ENCODE measurements at regions of chr16 and their contacts with region 1.

Region 1: DNA sequence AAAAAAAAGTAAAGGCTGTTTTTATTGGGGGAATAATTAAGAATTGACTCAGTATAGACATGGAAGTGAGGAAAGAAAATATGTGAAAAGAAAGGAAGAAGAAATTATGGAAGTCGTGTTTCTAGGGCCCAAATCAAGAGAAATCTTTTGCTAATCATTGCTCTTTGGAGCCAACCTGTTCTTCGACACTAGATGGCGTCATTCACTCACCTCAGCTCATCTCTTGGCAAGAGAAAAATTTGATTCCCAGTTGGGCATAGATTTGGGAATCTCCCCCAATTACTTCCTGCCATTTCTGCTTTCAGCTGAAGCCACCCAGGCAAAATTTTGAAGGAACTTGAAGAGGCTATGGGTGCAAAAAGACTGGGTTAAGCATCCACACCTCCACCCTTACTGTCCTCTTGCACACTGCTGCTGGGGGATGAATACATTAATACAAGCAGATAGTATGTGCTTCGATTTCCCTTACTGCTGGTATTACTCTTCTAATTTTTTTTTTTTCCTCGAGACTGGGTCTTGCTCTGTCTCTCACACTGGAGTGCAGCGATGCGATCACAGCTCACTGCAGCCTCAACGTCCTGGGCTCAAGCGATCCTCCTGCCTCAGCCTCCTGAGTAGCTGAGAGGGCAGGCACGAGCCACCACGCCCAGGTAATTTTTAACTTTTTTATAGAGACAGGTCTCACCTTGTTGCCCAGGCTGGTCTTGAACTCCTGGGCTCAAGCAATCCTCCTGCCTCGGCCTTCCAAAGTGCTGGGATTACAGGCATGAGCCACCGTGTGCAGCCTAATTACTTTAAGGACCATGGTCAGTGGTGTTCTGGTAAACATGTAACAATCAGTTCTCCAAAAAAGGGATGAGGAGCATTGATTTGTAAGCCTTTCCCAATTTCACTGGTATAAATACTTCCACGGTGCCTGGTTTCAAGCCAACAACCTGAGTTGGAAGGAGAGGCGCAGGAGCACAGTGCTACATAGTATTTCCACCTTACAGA is 13.5 kb downstream of the PSMD7 start:
- DNase-seq: no peak
- ATAC-seq: peak; percentile 81
- H3K4me3 ChIP-seq: no peak overlapping the region
- H3K27ac ChIP-seq: no peak overlapping the region
- H3K4me1 ChIP-seq: no peaks in the 10 kb centered on the region
- H3K27me3 ChIP-seq: no peaks in the 10 kb centered on the region
- CTCF ChIP-seq: peak; percentile 78 to 86 (median 82)
- EP300 ChIP-seq: no peak
- POLR2A ChIP-seq: no peak
- RAD21 ChIP-seq: peak; percentile 82

Region 2: DNA sequence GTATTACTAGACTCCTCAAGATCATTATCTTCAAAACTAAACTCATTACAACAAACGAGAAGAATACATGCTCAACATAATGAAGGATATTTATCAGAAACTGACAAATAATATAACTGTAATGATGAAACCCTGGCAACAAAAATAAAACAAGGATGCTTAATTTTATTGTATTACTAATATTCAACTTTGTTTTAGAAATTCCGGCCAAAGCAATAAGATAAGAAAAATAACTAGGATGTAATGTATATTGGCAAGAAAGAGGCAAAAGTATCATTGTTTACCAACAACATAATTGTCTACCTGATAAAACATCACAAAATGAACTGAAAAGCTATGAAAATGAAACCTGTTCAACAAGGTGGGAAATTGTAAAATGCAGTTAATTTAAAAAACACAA is 673.9 kb before region 1 on chr16:
- CTCF ChIA-PET with region 1: no interaction called
- POLR2A ChIA-PET with region 1: no interaction called
- RAD21 ChIA-PET with region 1: no interaction called
- SMC1A ChIA-PET with region 1: no interaction called
- in situ Hi-C with region 1: no loop called
- intact Hi-C with region 1: no loop called
- DNase-seq: no peak
- ATAC-seq: no peak
- H3K4me3 ChIP-seq: no peak overlapping the region
- H3K27ac ChIP-seq: no peak overlapping the region
- H3K4me1 ChIP-seq: no peaks in the 10 kb centered on the region
- H3K27me3 ChIP-seq: no peaks in the 10 kb centered on the region
- CTCF ChIP-seq: no peak
- EP300 ChIP-seq: no peak
- POLR2A ChIP-seq: no peak
- RAD21 ChIP-seq: no peak

Region 3: GRCh38 chr16:74079232-74079586 is 230.9 kb before region 1 on chr16:
- CTCF ChIA-PET with region 1: no interaction called
- POLR2A ChIA-PET with region 1: no interaction called
- RAD21 ChIA-PET with region 1: no interaction called
- SMC1A ChIA-PET with region 1: no interaction called
- in situ Hi-C with region 1: no loop called
- intact Hi-C with region 1: no loop called
- DNase-seq: no peak
- ATAC-seq: peak; percentile 70
- H3K4me3 ChIP-seq: no peak overlapping the region
- H3K27ac ChIP-seq: no peak overlapping the region
- H3K4me1 ChIP-seq: no peaks in the 10 kb centered on the region
- H3K27me3 ChIP-seq: no peaks in the 10 kb centered on the region
- CTCF ChIP-seq: no peak
- EP300 ChIP-seq: 0 out of 4 replicates have a peak, but pooled peaks of 1 of the 2 experiments have one; percentile 7
- POLR2A ChIP-seq: no peak
- RAD21 ChIP-seq: no peak

Region 4: DNA sequence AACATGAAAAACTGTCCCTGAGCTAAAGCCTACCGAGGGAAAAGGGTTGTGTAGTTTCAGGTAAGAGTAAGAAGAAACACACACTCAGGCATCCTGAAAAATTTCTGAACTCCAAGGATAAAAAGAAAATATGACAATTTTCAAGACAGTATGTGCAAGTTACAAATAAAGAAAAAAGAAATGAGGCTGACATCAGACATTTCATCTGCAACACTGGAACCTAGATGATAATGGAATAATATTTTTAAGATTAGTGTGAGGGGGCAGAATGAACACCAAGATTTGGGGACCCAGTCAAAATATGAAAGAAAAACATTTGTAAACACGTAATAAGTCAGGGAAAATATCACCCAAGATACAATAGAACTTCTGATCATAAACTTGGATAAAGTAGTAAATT is 149.3 kb before region 1 on chr16:
- CTCF ChIA-PET with region 1: no interaction called
- POLR2A ChIA-PET with region 1: no interaction called
- RAD21 ChIA-PET with region 1: no interaction called
- SMC1A ChIA-PET with region 1: no interaction called
- in situ Hi-C with region 1: no loop called
- intact Hi-C with region 1: no loop called
- DNase-seq: no peak
- ATAC-seq: no peak
- H3K4me3 ChIP-seq: no peak overlapping the region
- H3K27ac ChIP-seq: no peak overlapping the region
- H3K4me1 ChIP-seq: no peaks in the 10 kb centered on the region
- H3K27me3 ChIP-seq: no peaks in the 10 kb centered on the region
- CTCF ChIP-seq: no peak
- EP300 ChIP-seq: no peak
- POLR2A ChIP-seq: no peak
- RAD21 ChIP-seq: no peak

Region 5: DNA sequence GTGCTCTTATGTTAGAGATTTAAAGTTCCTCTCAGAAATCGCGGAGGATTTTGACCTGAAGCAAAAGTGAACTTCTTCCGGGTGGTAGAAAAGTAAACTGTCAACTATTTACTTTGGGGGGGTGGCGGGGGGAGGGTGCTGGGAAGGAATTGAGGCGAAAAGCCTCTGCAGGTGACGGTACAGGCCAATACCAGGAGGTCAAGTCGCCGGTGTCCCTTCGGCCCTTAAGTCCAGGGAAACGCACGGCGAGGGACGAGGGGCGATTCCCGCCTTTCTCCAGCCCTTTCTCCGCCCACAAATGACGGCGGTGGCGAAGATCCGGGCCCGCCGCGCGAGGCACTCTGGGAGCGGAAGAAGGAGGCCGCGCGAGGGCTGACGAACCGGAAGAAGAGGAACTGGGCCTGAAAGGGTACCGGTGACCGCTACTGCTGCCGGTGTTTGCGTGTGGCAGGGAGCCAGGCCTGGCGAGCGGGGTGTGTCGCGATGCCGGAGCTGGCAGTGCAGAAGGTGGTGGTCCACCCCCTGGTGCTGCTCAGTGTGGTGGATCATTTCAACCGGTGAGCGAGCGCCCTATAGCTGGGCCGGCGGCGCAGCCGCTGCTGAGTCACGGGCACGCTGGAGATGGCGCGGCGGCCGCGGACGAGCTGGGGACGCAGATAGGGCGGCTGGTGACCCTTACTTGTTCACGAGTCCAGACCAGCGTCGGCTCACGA is 13.5 kb before region 1 on chr16 and contains the start of gene PSMD7:
- CTCF ChIA-PET with region 1: interaction called, 33 read pairs
- POLR2A ChIA-PET with region 1: no interaction called
- RAD21 ChIA-PET with region 1: no interaction called
- SMC1A ChIA-PET with region 1: interaction called, 4 read pairs
- in situ Hi-C with region 1: no loop called
- intact Hi-C with region 1: no loop called
- DNase-seq: peak; percentile 40
- ATAC-seq: peak; percentile 96
- H3K4me3 ChIP-seq: peak within 1 kb of the TSS; percentile 72
- H3K27ac ChIP-seq: peak within 1 kb of the TSS; percentile 88
- H3K4me1 ChIP-seq: peaks cover 5% of the 10 kb centered on the region; the same call in 1 of the 2 replicates
- H3K27me3 ChIP-seq: no peaks in the 10 kb centered on the region
- CTCF ChIP-seq: no peak
- EP300 ChIP-seq: no peak
- POLR2A ChIP-seq: peak; percentile 99
- RAD21 ChIP-seq: no peak
- polyA plus RNA-seq, gene PSMD7: 66.9 to 102 TPM

Region 6: GRCh38 chr16:74431516-74431915 is 121.4 kb after region 1 on chr16:
- CTCF ChIA-PET with region 1: interaction called, 11 read pairs
- POLR2A ChIA-PET with region 1: no interaction called
- RAD21 ChIA-PET with region 1: interaction called, 3 read pairs
- SMC1A ChIA-PET with region 1: interaction called, 5 read pairs
- in situ Hi-C with region 1: loop called (anchors 5 kb)
- intact Hi-C with region 1: loop called (anchors 2 kb)
- DNase-seq: no peak
- ATAC-seq: no peak
- H3K4me3 ChIP-seq: no peak overlapping the region
- H3K27ac ChIP-seq: no peak overlapping the region
- H3K4me1 ChIP-seq: no peaks in the 10 kb centered on the region
- H3K27me3 ChIP-seq: no peaks in the 10 kb centered on the region
- CTCF ChIP-seq: no peak
- EP300 ChIP-seq: no peak
- POLR2A ChIP-seq: no peak
- RAD21 ChIP-seq: no peak

Region 7: DNA sequence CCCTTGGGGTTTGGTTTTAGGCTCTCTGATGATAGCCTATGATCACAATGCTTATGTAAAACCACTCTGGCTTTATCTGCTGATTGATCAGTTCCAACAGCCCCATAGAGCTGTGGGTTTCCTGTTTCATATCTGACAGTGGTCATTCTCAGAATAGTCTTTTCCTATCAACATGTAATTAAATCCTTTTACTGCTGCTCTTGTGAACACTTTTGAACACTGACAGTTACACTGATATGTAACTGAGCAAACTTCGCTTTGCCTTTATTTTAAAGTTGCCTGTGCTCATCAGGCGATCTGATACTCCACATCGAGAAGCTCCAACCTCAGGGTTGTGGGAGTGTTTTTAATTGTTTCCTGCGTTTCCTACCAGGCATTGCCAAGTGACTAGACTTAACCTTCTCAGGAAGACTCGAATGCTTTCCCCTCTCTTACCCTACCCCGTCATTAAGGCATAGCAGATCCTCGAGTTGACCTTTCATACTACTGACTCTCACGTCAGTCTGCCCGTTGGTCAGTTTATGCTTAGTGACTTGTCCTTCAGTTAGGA is 128.5 kb after region 1 on chr16:
- CTCF ChIA-PET with region 1: interaction called, 5 read pairs
- POLR2A ChIA-PET with region 1: no interaction called
- RAD21 ChIA-PET with region 1: interaction called, 3 read pairs
- SMC1A ChIA-PET with region 1: no interaction called
- in situ Hi-C with region 1: loop called (anchors 5 kb)
- intact Hi-C with region 1: no loop called
- DNase-seq: no peak
- ATAC-seq: no peak
- H3K4me3 ChIP-seq: no peak overlapping the region
- H3K27ac ChIP-seq: no peak overlapping the region
- H3K4me1 ChIP-seq: no peaks in the 10 kb centered on the region
- H3K27me3 ChIP-seq: no peaks in the 10 kb centered on the region
- CTCF ChIP-seq: no peak
- EP300 ChIP-seq: no peak
- POLR2A ChIP-seq: no peak
- RAD21 ChIP-seq: no peak

Region 8: GRCh38 chr16:74623214-74623842 is 313.2 kb after region 1 on chr16:
- CTCF ChIA-PET with region 1: interaction called, 11 read pairs
- POLR2A ChIA-PET with region 1: no interaction called
- RAD21 ChIA-PET with region 1: interaction called, 3 read pairs
- SMC1A ChIA-PET with region 1: interaction called, 4 read pairs
- in situ Hi-C with region 1: loop called (anchors 10 kb)
- intact Hi-C with region 1: loop called (anchors 2 kb)
- DNase-seq: no peak
- ATAC-seq: peak; percentile 76
- H3K4me3 ChIP-seq: no peak overlapping the region
- H3K27ac ChIP-seq: no peak overlapping the region
- H3K4me1 ChIP-seq: peaks cover 8% of the 10 kb centered on the region
- H3K27me3 ChIP-seq: no peaks in the 10 kb centered on the region
- CTCF ChIP-seq: peak; percentile 48 to 71 (median 68)
- EP300 ChIP-seq: no peak
- POLR2A ChIP-seq: no peak
- RAD21 ChIP-seq: peak; percentile 75